ENCODE measurements at regions of chrX and their contacts with region 1.

Region 1: GRCh38 chrX:46198858-46199257 is 346.4 kb downstream of the ZNF674 start:
- DNase-seq: peak; percentile 73
- ATAC-seq: peak; percentile 83
- H3K4me3 ChIP-seq: no peak overlapping the region
- H3K27ac ChIP-seq: no peak overlapping the region
- H3K4me1 ChIP-seq: no peaks in the 10 kb centered on the region
- H3K27me3 ChIP-seq: no peaks in the 10 kb centered on the region
- CTCF ChIP-seq: no peak
- EP300 ChIP-seq: peak in 1 of 2 experiments; percentile 49; a peak in 2 of 4 replicates
- POLR2A ChIP-seq: no peak
- RAD21 ChIP-seq: no peak

Region 2: DNA sequence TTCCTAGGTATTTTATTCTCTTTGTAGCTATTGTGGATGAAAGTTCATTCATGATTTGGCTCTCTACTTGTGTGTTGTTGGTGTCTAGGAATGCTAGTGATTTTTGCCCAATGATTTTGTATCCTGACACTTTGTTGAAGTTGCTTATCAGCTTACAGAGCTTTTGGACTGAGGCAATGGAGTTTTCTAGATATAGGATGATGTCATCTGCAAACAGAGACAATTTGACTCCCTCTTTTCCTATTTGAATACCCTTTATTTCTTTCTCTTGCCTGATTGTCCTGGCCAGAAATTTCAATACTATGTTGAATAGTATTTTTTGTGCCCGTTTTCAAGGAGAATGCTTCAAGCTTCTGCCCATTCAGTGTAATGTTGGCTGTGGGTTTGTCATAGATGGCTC is 96.5 kb before region 1 on chrX:
- CTCF ChIA-PET with region 1: no interaction called
- POLR2A ChIA-PET with region 1: no interaction called
- in situ Hi-C with region 1: no loop called
- intact Hi-C with region 1: no loop called
- DNase-seq: no peak
- ATAC-seq: no peak
- H3K4me3 ChIP-seq: no peak overlapping the region
- H3K27ac ChIP-seq: no peak overlapping the region
- H3K4me1 ChIP-seq: no peaks in the 10 kb centered on the region
- H3K27me3 ChIP-seq: no peaks in the 10 kb centered on the region
- CTCF ChIP-seq: no peak
- EP300 ChIP-seq: no peak
- POLR2A ChIP-seq: no peak
- RAD21 ChIP-seq: no peak

Region 3: GRCh38 chrX:46140272-46140671 is 58.6 kb before region 1 on chrX:
- CTCF ChIA-PET with region 1: no interaction called
- POLR2A ChIA-PET with region 1: no interaction called
- in situ Hi-C with region 1: no loop called
- intact Hi-C with region 1: no loop called
- DNase-seq: no peak
- ATAC-seq: no peak
- H3K4me3 ChIP-seq: no peak overlapping the region
- H3K27ac ChIP-seq: no peak overlapping the region
- H3K4me1 ChIP-seq: no peaks in the 10 kb centered on the region
- H3K27me3 ChIP-seq: no peaks in the 10 kb centered on the region
- CTCF ChIP-seq: no peak
- EP300 ChIP-seq: no peak
- POLR2A ChIP-seq: no peak
- RAD21 ChIP-seq: no peak

Region 4: DNA sequence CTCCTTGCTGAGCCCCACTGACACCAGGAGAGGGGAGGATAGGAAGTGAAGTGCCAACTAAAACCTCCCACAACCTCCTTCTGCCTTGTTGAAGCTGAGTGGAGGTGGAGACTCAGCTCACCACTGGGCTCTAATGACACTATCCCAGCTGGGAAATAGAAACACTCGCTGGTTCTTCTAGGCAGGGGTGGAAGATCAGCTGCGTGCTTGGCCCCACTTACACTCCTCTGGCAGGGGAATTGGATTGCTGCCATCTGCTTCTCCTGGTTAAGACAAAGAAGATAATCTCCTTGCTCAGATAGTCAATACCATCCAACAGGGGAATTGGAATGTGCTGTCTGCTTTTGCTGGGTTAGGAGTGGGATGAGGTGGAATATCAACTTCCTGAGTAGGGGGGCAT is 46.1 kb before region 1 on chrX:
- CTCF ChIA-PET with region 1: no interaction called
- POLR2A ChIA-PET with region 1: no interaction called
- in situ Hi-C with region 1: no loop called
- intact Hi-C with region 1: no loop called
- DNase-seq: no peak
- ATAC-seq: no peak
- H3K4me3 ChIP-seq: no peak overlapping the region
- H3K27ac ChIP-seq: no peak overlapping the region
- H3K4me1 ChIP-seq: no peaks in the 10 kb centered on the region; the same call in 1 of the 2 replicates
- H3K27me3 ChIP-seq: no peaks in the 10 kb centered on the region
- CTCF ChIP-seq: no peak
- EP300 ChIP-seq: no peak
- POLR2A ChIP-seq: no peak
- RAD21 ChIP-seq: no peak

Region 5: DNA sequence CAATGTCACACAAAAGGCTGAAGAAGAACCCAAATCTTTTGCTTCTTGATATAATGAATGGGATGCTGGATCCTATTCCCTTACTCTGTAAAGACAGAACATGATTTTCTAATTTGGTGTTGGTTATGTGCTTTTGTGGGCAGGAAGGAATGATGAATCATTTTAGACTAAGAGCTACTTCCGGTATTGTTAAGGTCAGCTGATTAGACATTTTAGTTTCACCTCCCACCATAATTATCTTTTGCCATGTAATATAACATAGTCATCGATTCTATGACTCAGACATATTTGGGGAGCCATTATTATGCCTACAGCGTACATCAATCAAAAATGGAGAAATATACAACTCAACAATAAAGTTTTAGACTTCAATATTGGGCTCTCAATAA is 81.1 kb after region 1 on chrX:
- CTCF ChIA-PET with region 1: no interaction called
- POLR2A ChIA-PET with region 1: no interaction called
- in situ Hi-C with region 1: no loop called
- intact Hi-C with region 1: loop called (anchors 1 kb)
- DNase-seq: no peak
- ATAC-seq: no peak
- H3K4me3 ChIP-seq: no peak overlapping the region
- H3K27ac ChIP-seq: no peak overlapping the region
- H3K4me1 ChIP-seq: no peaks in the 10 kb centered on the region
- H3K27me3 ChIP-seq: no peaks in the 10 kb centered on the region
- CTCF ChIP-seq: no peak
- EP300 ChIP-seq: no peak
- POLR2A ChIP-seq: no peak
- RAD21 ChIP-seq: no peak

Region 6: GRCh38 chrX:46310815-46311497 is 112.1 kb after region 1 on chrX:
- CTCF ChIA-PET with region 1: no interaction called
- POLR2A ChIA-PET with region 1: no interaction called
- in situ Hi-C with region 1: no loop called
- intact Hi-C with region 1: no loop called
- DNase-seq: no peak
- ATAC-seq: no peak
- H3K4me3 ChIP-seq: no peak overlapping the region
- H3K27ac ChIP-seq: no peak overlapping the region
- H3K4me1 ChIP-seq: peaks cover 40% of the 10 kb centered on the region
- H3K27me3 ChIP-seq: no peaks in the 10 kb centered on the region
- CTCF ChIP-seq: no peak
- EP300 ChIP-seq: no peak
- POLR2A ChIP-seq: no peak
- RAD21 ChIP-seq: no peak